CD4-positive, alpha-beta T cell (primary cell): ENCODE measurements at regions of chr3 and their contacts with region 1.

Region 1: GRCh38 chr3:132352541-132353143 is 35.4 kb downstream of the ACP3 start:
- DNase-seq: peak; percentile 18 to 79 (median 54)
- ATAC-seq: peak; percentile 88
- H3K4me3 ChIP-seq: no peak overlapping the region
- H3K4me3 Mint-ChIP-seq: no peak overlapping the region
- H3K27ac ChIP-seq: no peak overlapping the region
- H3K27ac Mint-ChIP-seq: no peak overlapping the region
- H3K4me1 ChIP-seq: no peaks in the 10 kb centered on the region
- H3K4me1 Mint-ChIP-seq: no peaks in the 10 kb centered on the region
- H3K27me3 ChIP-seq: no peaks in the 10 kb centered on the region
- H3K27me3 Mint-ChIP-seq: peaks cover 10% of the 10 kb centered on the region
- CTCF ChIP-seq: peak; percentile 95

Region 2: GRCh38 chr3:132210476-132211346 is 141.9 kb before region 1 on chr3:
- CTCF ChIA-PET with region 1: no interaction called
- POLR2A ChIA-PET with region 1: no interaction called
- intact Hi-C with region 1: no loop called
- DNase-seq: peak in 5 of 14 experiments; percentile 1 to 17 (median 3)
- ATAC-seq: no peak
- H3K4me3 ChIP-seq: no peak overlapping the region
- H3K4me3 Mint-ChIP-seq: no peak overlapping the region
- H3K27ac ChIP-seq: no peak overlapping the region
- H3K27ac Mint-ChIP-seq: no peak overlapping the region
- H3K4me1 ChIP-seq: no peaks in the 10 kb centered on the region
- H3K4me1 Mint-ChIP-seq: no peaks in the 10 kb centered on the region
- H3K27me3 ChIP-seq: no peaks in the 10 kb centered on the region
- H3K27me3 Mint-ChIP-seq: peaks cover 32% of the 10 kb centered on the region
- CTCF ChIP-seq: no peak

Region 3: DNA sequence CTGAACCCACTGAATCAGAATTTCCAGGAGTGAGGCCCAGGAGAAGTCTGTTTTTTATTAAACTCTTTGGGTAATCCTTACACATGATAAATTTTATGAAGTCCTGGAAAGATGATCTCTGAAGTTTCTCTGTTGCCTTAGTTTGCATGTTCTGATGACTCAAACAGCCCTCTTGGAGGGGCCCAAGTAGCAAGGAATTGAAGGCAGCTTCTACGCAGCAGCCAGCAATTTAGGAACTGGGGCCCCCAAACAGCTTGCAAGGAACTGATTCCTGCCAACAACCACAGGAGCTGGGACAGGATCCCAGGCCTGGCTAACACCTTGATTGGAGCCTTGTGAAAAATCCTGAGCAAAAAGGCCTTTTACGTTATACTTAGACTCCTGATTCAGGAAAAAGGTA is 40.8 kb before region 1 on chr3:
- CTCF ChIA-PET with region 1: no interaction called
- POLR2A ChIA-PET with region 1: no interaction called
- intact Hi-C with region 1: no loop called
- DNase-seq: no peak
- ATAC-seq: no peak
- H3K4me3 ChIP-seq: no peak overlapping the region
- H3K4me3 Mint-ChIP-seq: no peak overlapping the region
- H3K27ac ChIP-seq: no peak overlapping the region
- H3K27ac Mint-ChIP-seq: no peak overlapping the region
- H3K4me1 ChIP-seq: no peaks in the 10 kb centered on the region
- H3K4me1 Mint-ChIP-seq: no peaks in the 10 kb centered on the region
- H3K27me3 ChIP-seq: no peaks in the 10 kb centered on the region
- H3K27me3 Mint-ChIP-seq: no peaks in the 10 kb centered on the region
- CTCF ChIP-seq: no peak

Region 4: DNA sequence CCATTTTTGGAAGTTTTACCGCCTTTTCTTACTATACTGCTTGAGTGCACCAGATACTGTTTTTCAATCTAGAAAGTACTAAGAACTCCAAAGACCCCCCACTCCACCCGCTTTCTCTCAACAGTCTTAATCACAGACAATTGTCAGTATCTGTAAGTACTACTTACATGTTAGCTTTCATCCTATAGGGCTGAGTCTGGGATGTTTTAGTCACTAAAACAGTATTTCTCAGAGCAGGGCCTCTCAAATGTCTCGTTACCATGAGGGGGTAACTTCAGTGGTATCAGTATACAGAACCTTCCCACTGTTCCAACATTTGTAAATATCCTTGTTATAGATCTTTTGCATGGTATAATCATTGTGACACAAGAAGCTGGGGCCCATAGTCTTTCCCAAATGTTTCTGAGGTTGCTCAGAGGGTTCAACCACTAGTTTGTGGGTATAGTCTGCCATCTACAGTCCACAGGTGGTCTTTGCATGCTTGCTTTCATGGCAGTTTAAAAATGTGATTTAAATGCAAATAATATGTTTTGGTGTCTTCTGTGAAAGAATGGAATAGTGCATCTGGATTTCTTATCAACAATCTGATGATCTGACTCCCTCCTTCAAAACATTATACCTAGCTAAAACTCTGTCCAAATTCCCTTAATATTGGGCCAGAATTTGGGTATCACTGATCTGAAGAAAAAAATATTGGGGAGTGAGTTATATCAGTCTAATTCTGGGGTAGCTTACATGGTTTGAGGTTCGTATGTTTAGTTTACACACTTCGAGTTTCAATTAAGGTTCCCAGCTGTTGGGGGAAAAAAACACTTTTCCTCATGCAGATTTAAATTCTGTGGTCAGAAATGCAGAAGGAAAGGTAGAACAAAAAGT is 46.6 kb after region 1 on chr3:
- CTCF ChIA-PET with region 1: interaction called, 3 read pairs
- POLR2A ChIA-PET with region 1: no interaction called
- intact Hi-C with region 1: loop called (anchors 1 kb)
- DNase-seq: peak in 4 of 14 experiments; percentile 5 to 53 (median 44)
- ATAC-seq: peak; percentile 51
- H3K4me3 ChIP-seq: no peak overlapping the region
- H3K4me3 Mint-ChIP-seq: no peak overlapping the region
- H3K27ac ChIP-seq: no peak overlapping the region
- H3K27ac Mint-ChIP-seq: no peak overlapping the region
- H3K4me1 ChIP-seq: no peaks in the 10 kb centered on the region
- H3K4me1 Mint-ChIP-seq: no peaks in the 10 kb centered on the region
- H3K27me3 ChIP-seq: no peaks in the 10 kb centered on the region
- H3K27me3 Mint-ChIP-seq: no peaks in the 10 kb centered on the region
- CTCF ChIP-seq: peak; percentile 63

Region 5: GRCh38 chr3:132486086-132486485 is 133.4 kb after region 1 on chr3:
- CTCF ChIA-PET with region 1: no interaction called
- POLR2A ChIA-PET with region 1: no interaction called
- intact Hi-C with region 1: loop called in 1 of 2 experiments (anchors 5 kb)
- DNase-seq: no peak
- ATAC-seq: no peak
- H3K4me3 ChIP-seq: no peak overlapping the region
- H3K4me3 Mint-ChIP-seq: no peak overlapping the region
- H3K27ac ChIP-seq: no peak overlapping the region
- H3K27ac Mint-ChIP-seq: no peak overlapping the region
- H3K4me1 ChIP-seq: no peaks in the 10 kb centered on the region
- H3K4me1 Mint-ChIP-seq: no peaks in the 10 kb centered on the region
- H3K27me3 ChIP-seq: no peaks in the 10 kb centered on the region
- H3K27me3 Mint-ChIP-seq: no peaks in the 10 kb centered on the region
- CTCF ChIP-seq: no peak

Region 6: DNA sequence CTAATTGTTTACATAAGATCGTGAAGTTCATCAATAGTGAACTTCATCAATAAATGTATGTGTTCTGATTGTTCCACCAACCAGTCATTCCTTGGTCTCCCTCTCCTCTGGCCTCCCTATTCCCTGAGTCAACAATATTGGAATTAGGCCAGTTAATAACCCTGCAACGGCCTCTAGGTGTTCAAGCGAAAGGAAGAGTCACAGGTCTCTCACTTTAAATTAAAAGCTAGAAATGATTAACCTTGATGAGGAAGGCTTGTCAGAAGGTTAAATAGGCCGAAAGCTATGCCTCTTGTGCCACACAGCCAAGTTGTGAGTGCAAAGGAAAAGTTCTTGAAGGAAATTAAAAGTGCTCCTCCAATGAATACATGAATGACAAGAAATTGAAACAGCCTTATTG is 155.0 kb after region 1 on chr3:
- CTCF ChIA-PET with region 1: no interaction called
- POLR2A ChIA-PET with region 1: no interaction called
- intact Hi-C with region 1: loop called in 1 of 2 experiments (anchors 10 kb)
- DNase-seq: no peak
- ATAC-seq: no peak
- H3K4me3 ChIP-seq: no peak overlapping the region
- H3K4me3 Mint-ChIP-seq: no peak overlapping the region
- H3K27ac ChIP-seq: no peak overlapping the region
- H3K27ac Mint-ChIP-seq: no peak overlapping the region
- H3K4me1 ChIP-seq: no peaks in the 10 kb centered on the region
- H3K4me1 Mint-ChIP-seq: no peaks in the 10 kb centered on the region
- H3K27me3 ChIP-seq: no peaks in the 10 kb centered on the region
- H3K27me3 Mint-ChIP-seq: no peaks in the 10 kb centered on the region
- CTCF ChIP-seq: no peak

Region 7: GRCh38 chr3:132641837-132642538 is 289.3 kb after region 1 on chr3:
- CTCF ChIA-PET with region 1: interaction called, 6 read pairs
- POLR2A ChIA-PET with region 1: no interaction called
- intact Hi-C with region 1: loop called (anchors 1 to 2 kb)
- DNase-seq: peak in 3 of 14 experiments; percentile 48 to 54 (median 51)
- ATAC-seq: peak; percentile 58
- H3K4me3 ChIP-seq: no peak overlapping the region
- H3K4me3 Mint-ChIP-seq: no peak overlapping the region
- H3K27ac ChIP-seq: no peak overlapping the region
- H3K27ac Mint-ChIP-seq: no peak overlapping the region
- H3K4me1 ChIP-seq: no peaks in the 10 kb centered on the region
- H3K4me1 Mint-ChIP-seq: no peaks in the 10 kb centered on the region
- H3K27me3 ChIP-seq: no peaks in the 10 kb centered on the region
- H3K27me3 Mint-ChIP-seq: no peaks in the 10 kb centered on the region
- CTCF ChIP-seq: peak; percentile 85

Region 8: DNA sequence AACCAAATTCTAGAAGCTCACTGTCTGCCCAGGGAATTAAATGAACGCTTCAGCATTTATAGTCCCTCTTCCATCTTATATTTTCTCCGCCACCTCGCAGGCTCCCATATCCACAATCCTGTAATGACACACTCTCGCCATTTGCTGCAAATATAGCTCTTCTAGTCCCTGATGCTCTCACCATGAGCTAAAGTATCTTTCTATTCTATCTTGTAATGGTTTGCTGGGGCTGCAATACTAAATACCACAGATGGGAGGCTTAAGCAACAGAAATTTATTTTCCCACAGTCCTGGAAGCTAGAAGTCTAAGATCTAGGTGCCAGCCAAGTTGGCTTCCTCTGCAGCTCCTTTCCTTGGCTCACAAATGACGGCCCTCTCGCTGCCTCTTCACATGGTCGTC is 476.5 kb after region 1 on chr3:
- CTCF ChIA-PET with region 1: no interaction called
- POLR2A ChIA-PET with region 1: no interaction called
- intact Hi-C with region 1: no loop called
- DNase-seq: no peak
- ATAC-seq: no peak
- H3K4me3 ChIP-seq: no peak overlapping the region
- H3K4me3 Mint-ChIP-seq: no peak overlapping the region
- H3K27ac ChIP-seq: no peak overlapping the region
- H3K27ac Mint-ChIP-seq: no peak overlapping the region
- H3K4me1 ChIP-seq: no peaks in the 10 kb centered on the region
- H3K4me1 Mint-ChIP-seq: no peaks in the 10 kb centered on the region
- H3K27me3 ChIP-seq: no peaks in the 10 kb centered on the region
- H3K27me3 Mint-ChIP-seq: peaks cover 5% of the 10 kb centered on the region
- CTCF ChIP-seq: no peak